Left ventricle myocardium superior (tissue), 1 donor: ENCODE measurements at regions of chr3 and their contacts with region 1.

Region 1: GRCh38 chr3:32018757-32019564 is 37.4 kb downstream of the ZNF860 start:
- DNase-seq: no peak
- ATAC-seq: peak; percentile 82

Region 2: DNA sequence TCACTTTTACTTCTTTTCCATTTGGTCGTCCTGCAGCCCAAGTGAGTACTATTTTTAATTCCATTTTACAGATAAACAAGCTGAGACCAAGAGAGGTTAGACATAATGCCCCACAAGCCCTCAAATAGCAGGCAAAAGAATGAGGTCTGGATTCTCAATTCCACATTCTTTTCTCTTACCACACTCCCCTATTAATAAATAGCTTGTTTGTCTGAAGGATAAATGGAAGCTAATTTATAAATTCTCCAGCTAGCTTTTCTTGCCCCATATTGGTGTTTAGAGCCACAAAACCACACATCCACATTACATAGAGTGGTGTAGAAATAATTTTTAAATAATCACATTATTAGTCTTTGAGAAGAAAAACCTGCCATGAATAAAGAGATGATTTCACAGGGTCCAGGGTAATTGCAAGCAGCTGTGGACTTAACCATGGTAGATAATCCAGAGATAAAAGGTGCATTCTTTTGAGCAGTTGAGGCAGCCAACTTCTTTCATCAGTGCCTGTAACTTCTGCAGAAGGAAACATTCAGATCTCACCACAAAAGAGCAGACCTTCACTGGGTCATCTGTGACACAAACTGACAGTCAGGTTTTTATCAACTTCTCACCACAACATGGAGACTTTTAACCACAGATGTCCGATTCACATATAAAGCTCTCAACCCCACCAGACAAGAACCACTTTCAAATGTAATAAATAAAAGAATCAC is 799.7 kb before region 1 on chr3:
- intact Hi-C with region 1: no loop called
- DNase-seq: no peak
- ATAC-seq: no peak

Region 3: DNA sequence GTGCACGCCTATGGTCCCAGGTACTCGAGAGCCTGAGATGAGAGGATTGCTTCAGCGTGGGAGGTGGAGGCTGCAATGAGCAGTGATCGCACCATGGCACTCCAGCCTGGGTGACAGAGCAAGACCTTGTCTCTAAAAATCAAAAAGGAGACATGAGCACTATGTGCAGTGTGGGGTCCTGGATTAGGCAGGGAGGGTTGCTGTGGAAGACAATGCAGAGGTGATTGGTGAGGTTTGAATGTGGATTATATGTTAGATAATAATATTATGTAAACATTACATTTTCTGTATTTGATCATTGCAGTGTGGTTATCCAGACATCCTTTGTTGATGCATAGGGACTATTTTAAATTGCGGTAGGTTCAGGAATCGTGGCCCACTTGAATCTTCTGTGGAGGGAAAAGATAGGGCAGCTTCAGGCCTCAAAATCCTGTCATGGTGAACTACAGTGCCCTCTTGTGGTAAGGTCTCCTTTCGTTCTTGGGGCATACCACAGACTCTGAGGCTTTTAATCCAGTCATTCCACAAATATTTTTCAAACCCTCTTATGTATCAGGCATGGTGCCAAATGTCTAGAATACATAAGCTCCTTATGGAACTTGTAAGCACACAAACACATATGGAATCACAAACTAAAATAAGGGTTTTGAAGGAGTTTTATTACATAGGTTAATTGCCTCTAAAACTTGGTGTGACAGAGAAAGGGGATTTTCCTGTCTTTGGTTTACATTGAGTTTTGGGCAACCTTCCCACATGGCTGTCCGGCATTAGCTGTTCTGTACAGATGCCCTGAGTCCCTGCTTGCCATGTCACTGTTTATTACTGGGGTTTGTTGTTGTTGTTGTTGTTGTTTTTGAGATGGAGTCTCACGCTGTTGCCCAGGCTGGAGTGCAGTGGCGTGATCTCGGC is 125.1 kb after region 1 on chr3:
- intact Hi-C with region 1: loop called (anchors 1 kb)
- DNase-seq: no peak
- ATAC-seq: peak; percentile 84

Region 4: DNA sequence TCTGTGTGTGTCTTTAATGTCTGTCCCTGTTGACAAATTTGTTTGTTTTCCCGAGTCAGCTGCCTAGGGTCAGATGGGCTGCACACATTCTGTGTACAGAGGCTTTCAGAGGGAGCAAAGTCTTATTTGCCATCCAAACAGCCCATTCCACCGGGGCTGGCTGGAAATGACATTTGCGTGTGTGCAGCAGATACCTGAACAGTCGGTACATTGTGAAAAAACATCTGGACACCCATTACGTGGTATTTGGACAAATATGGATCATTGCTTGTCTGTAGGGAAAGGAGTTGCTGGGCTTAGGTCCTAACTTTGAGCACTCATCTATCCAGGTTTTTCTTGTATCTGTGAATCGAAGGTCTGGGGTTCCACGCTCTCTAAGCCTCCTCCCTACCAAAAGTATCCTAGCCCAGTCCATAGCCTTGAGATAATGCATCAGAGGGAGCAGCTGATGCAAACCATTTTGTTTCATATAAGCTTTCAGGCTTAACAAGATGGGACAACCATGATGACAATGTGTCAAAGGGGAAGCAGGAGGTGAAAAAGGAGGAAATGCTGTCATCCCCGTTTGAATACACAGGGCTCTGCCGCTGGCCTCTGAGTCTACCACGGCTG is 197.3 kb after region 1 on chr3:
- intact Hi-C with region 1: no loop called
- DNase-seq: no peak
- ATAC-seq: no peak